Right lobe of liver (tissue), 6 donors: ENCODE measurements at regions of chrX and their contacts with region 1.

Region 1: GRCh38 chrX:103464774-103465117 is 54.5 kb downstream of the RAB40A start:
- DNase-seq: peak in 2 of 3 donors; percentile 45 to 49
- ATAC-seq: peak; percentile 93 to 98 (median 95)
- H3K4me3 ChIP-seq: peak overlapping the region in 2 of 3 donors; percentile 7 to 18
- H3K27ac ChIP-seq: no peak overlapping the region
- H3K4me1 ChIP-seq: no peaks in the 10 kb centered on the region
- H3K27me3 ChIP-seq: no peaks in the 10 kb centered on the region
- CTCF ChIP-seq: peak; percentile 62 to 70 (median 62)
- POLR2A ChIP-seq: no peak

Region 2: DNA sequence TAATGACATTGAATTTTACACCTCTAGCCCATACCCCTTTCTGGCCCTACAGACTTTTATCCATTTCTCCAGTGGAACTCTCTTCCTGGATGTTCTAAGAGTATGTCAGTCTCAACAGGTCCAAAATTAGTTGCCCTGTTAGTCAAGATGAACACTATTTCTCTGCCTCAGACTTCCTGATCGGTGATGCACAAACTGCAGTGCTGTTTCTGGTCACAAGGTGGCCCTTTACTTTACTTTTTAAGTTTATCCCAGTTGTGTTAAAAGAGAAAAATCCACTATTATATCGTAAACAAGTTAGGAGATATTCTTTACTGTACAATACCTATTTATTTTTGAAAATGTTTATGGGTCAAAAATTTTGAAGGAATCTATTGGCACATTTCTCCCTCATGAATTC is 121.6 kb before region 1 on chrX:
- intact Hi-C with region 1: loop called in 1 of 2 experiments (anchors 10 kb)
- DNase-seq: no peak
- ATAC-seq: peak; percentile 64 to 83 (median 68)
- H3K4me3 ChIP-seq: no peak overlapping the region
- H3K27ac ChIP-seq: no peak overlapping the region
- H3K4me1 ChIP-seq: no peaks in the 10 kb centered on the region
- H3K27me3 ChIP-seq: peaks cover 0 to 7% of the 10 kb centered on the region in 2 donors
- CTCF ChIP-seq: peak; percentile 64 to 73 (median 67)
- POLR2A ChIP-seq: no peak

Region 3: DNA sequence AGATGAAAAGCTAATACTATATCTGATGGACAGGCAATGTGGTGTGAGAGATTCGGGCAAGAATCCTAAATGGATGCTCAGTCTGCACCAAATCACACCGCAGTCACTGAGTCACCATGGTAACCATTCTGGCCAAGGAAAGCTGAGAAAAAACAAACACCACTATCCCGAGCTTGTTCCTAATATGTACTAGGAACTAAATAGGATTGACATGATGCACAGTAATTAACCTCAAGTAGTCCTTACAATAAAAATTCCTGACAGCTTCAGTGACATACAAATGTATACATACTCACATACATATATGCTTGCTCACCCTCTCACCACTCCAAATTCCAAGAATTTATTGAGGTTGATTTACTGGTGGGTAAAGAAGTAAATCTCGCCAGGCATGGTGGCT is 55.6 kb after region 1 on chrX:
- intact Hi-C with region 1: no loop called
- DNase-seq: no peak
- ATAC-seq: no peak
- H3K4me3 ChIP-seq: no peak overlapping the region
- H3K27ac ChIP-seq: no peak overlapping the region
- H3K4me1 ChIP-seq: no peaks in the 10 kb centered on the region
- H3K27me3 ChIP-seq: no peaks in the 10 kb centered on the region
- CTCF ChIP-seq: no peak
- POLR2A ChIP-seq: no peak

Region 4: GRCh38 chrX:103629318-103630170 is 164.8 kb after region 1 on chrX:
- intact Hi-C with region 1: no loop called
- DNase-seq: peak; percentile 60 to 70 (median 62)
- ATAC-seq: peak; percentile 79 to 88 (median 81)
- H3K4me3 ChIP-seq: peak overlapping the region; percentile 51 to 66 (median 59)
- H3K27ac ChIP-seq: peak overlapping the region; percentile 70 to 83 (median 81)
- H3K4me1 ChIP-seq: no peaks in the 10 kb centered on the region
- H3K27me3 ChIP-seq: no peaks in the 10 kb centered on the region
- CTCF ChIP-seq: peak in 3 of 4 donors; percentile 32 to 42 (median 35)
- POLR2A ChIP-seq: peak; percentile 55